ENCODE measurements at regions of chr3 and their contacts with region 1.

Region 1: DNA sequence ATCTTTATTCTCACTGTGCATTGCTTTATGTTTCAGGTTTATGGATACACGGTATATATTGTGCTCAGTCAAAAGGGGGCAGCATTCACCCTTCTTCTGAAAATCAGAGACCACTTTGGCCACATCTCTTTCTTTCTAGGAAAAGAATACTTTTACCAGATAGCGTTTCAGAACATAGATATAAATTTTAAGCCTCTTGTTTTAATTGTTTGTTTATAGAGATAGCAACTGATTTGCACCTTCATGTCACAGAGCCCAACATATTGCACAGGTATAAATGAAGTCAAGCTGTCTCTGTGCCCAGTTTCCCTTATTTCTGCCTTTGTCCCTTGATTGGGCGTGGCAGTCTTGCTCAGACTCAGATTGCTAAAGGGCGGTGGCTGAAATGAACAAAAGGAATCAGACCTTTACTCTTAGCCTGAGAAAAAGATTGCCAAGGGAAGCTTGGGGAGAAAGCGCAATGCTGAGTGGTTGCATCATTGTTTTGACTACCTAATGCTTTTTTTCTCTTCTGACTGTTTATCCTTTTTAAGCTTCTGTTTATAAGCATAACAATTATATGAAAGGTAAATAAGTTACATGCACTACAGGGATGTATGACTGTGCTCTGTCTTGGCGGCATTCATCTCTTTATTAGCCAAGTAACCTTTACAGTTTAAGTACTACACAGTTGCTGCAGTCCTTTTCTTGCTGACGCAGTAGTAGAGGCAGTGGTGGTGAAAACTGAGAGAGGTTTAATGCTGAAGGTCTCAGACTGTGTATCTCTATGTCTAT is 70.8 kb upstream of the ZBTB20 start:
- DNase-seq: no peak
- ATAC-seq: peak; percentile 50
- H3K4me3 Mint-ChIP-seq: no peak overlapping the region
- H3K27ac Mint-ChIP-seq: no peak overlapping the region
- H3K4me1 Mint-ChIP-seq: peaks cover 3% of the 10 kb centered on the region
- H3K27me3 Mint-ChIP-seq: peaks cover 18% of the 10 kb centered on the region
- CTCF ChIP-seq: no peak

Region 2: GRCh38 chr3:115469649-115470048 is 251.8 kb after region 1 on chr3:
- CTCF ChIA-PET with region 1: no interaction called
- POLR2A ChIA-PET with region 1: no interaction called
- intact Hi-C with region 1: no loop called
- DNase-seq: no peak
- ATAC-seq: peak; percentile 91
- H3K4me3 Mint-ChIP-seq: no peak overlapping the region
- H3K27ac Mint-ChIP-seq: no peak overlapping the region
- H3K4me1 Mint-ChIP-seq: peaks cover 3% of the 10 kb centered on the region
- H3K27me3 Mint-ChIP-seq: peaks cover 5% of the 10 kb centered on the region
- CTCF ChIP-seq: no peak

Region 3: GRCh38 chr3:115814778-115815380 is 597.0 kb after region 1 on chr3:
- CTCF ChIA-PET with region 1: interaction called, 5 read pairs
- POLR2A ChIA-PET with region 1: no interaction called
- intact Hi-C with region 1: loop called (anchors 2 kb)
- DNase-seq: peak; percentile 44
- ATAC-seq: peak; percentile 70
- H3K4me3 Mint-ChIP-seq: no peak overlapping the region
- H3K27ac Mint-ChIP-seq: no peak overlapping the region
- H3K4me1 Mint-ChIP-seq: no peaks in the 10 kb centered on the region
- H3K27me3 Mint-ChIP-seq: peaks cover 5% of the 10 kb centered on the region
- CTCF ChIP-seq: no peak